Tibial artery (tissue), 4 donors: ENCODE measurements at regions of chr2 and their contacts with region 1.

Region 1: GRCh38 chr2:86079981-86080911 is 25.4 kb downstream of the POLR1A start:
- DNase-seq: peak; percentile 83 to 86
- H3K4me3 ChIP-seq: no peak overlapping the region
- H3K27ac ChIP-seq: no peak overlapping the region
- H3K4me1 ChIP-seq: no peaks in the 10 kb centered on the region
- H3K27me3 ChIP-seq: no peaks in the 10 kb centered on the region
- CTCF ChIP-seq: peak; percentile 72 to 80

Region 2: DNA sequence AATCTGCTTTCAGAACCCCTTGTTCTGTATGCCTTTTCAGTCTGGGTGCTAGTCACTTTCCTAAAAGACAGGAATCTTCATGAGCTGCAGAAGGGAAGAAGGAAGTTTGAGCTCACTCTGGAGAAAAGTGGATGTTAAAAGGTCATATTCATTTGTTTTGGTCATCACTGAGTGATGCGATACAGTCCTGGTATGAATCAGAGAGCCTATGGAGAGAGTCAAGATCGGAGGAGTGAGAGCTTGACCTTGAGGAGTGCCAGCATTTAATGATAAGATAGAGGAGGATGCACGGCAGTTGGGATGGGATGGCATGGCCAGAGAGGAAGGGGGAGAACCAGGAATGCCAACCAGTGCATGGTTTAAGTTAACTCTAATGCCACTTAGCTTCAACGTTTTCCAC is 444.6 kb before region 1 on chr2:
- intact Hi-C with region 1: loop called (anchors 10 kb)
- DNase-seq: no peak
- H3K4me3 ChIP-seq: no peak overlapping the region
- H3K27ac ChIP-seq: no peak overlapping the region
- H3K4me1 ChIP-seq: no peaks in the 10 kb centered on the region
- H3K27me3 ChIP-seq: no peaks in the 10 kb centered on the region
- CTCF ChIP-seq: no peak

Region 3: GRCh38 chr2:85728883-85729824 is 351.1 kb before region 1 on chr2:
- intact Hi-C with region 1: loop called (anchors 10 kb)
- DNase-seq: peak; percentile 91 to 95
- H3K4me3 ChIP-seq: no peak overlapping the region
- H3K27ac ChIP-seq: peak overlapping the region; percentile 31 to 51
- H3K4me1 ChIP-seq: peaks cover 0 to 16% (median 9%) of the 10 kb centered on the region in 4 donors
- H3K27me3 ChIP-seq: no peaks in the 10 kb centered on the region
- CTCF ChIP-seq: peak; percentile 97 to 98

Region 4: GRCh38 chr2:85826990-85827878 is 253.0 kb before region 1 on chr2:
- intact Hi-C with region 1: loop called (anchors 1 kb)
- DNase-seq: peak; percentile 77 to 82
- H3K4me3 ChIP-seq: no peak overlapping the region
- H3K27ac ChIP-seq: no peak overlapping the region
- H3K4me1 ChIP-seq: peaks cover 0 to 9% (median 7%) of the 10 kb centered on the region in 4 donors
- H3K27me3 ChIP-seq: no peaks in the 10 kb centered on the region
- CTCF ChIP-seq: peak; percentile 91 to 96

Region 5: DNA sequence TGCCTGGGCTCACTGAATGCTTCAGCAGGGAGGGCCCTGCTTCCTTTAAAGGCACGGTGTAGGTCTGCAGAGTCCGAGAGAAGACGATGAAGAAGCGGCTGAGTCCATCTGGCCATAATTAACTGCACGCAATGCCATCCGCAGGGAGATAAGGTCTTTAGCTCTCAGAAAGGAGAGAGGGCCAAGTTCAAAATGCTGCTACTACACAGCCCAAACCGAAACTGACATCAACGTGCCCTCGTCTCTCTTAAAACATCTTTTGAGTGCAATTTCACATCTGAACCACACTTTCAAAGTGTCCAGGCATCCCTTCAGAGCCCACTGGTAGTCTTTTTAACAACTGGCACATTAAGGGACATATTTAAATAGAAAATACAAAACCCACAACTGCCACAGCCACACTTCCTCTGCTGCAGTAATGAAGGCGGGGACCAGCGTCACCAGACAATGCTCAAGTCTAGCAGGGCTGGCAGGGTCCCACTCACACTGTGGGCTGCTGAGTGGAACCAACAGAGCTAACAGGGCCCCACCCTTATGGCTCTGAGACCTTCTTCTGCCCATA is 227.2 kb before region 1 on chr2:
- intact Hi-C with region 1: no loop called
- DNase-seq: peak in 1 of 2 donors; percentile 44
- H3K4me3 ChIP-seq: no peak overlapping the region
- H3K27ac ChIP-seq: no peak overlapping the region
- H3K4me1 ChIP-seq: no peaks in the 10 kb centered on the region
- H3K27me3 ChIP-seq: no peaks in the 10 kb centered on the region
- CTCF ChIP-seq: no peak

Region 6: DNA sequence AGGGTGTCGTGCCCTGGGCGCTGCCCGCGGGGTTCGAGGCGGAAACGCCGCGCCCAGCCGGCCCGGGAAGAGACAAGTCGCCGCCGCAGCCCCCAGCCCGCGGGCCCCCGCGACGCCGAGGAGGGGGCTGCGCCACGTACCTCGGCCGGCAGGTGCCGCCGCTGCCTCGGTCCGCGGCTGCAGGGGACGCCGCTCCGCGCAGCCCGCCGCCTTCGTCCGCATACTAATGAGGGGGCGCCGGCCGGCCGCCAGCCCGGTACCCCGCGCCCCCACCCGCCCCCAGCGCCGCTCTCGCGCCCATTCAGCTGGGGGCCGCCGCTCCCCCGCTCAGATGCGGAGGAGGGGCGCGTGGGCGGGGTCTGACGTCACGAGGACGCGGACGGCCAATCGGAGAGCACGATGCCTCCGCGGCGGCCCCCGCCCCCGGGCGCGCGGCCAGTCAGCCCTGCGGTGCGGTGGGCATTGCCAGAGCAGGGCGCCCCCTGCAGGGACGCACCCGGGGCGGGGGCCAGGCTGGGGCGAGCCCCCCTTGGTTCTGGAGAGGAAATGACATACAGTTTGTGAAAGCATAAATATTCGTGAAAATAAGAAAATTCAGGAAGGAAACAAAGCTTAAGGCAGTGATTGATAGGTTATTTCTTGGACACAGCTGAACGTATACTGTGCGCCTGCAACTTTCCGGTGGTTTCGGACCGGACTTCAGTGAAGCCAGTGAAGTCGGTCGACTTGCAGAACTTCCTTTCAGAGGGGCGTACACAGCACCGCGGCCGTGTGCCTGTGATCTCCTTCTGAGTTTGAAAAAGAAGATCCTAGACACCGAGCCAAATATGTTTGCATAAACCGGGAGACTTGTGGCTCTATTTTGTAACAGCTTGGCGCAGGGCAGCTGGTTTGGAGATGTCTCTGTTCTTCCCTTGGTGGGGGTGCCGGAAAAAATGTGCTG is 191.3 kb before region 1 on chr2 and contains the start of gene ST3GAL5:
- intact Hi-C with region 1: loop called (anchors 5 kb)
- DNase-seq: peak; percentile 86 to 93
- H3K4me3 ChIP-seq: peak within 1 kb of the TSS; percentile 61 to 76
- H3K27ac ChIP-seq: peak within 1 kb of the TSS; percentile 71 to 77
- H3K4me1 ChIP-seq: peaks cover 0 to 37% (median 23%) of the 10 kb centered on the region in 4 donors
- H3K27me3 ChIP-seq: no peaks in the 10 kb centered on the region
- CTCF ChIP-seq: peak; percentile 52 to 64

Region 7: DNA sequence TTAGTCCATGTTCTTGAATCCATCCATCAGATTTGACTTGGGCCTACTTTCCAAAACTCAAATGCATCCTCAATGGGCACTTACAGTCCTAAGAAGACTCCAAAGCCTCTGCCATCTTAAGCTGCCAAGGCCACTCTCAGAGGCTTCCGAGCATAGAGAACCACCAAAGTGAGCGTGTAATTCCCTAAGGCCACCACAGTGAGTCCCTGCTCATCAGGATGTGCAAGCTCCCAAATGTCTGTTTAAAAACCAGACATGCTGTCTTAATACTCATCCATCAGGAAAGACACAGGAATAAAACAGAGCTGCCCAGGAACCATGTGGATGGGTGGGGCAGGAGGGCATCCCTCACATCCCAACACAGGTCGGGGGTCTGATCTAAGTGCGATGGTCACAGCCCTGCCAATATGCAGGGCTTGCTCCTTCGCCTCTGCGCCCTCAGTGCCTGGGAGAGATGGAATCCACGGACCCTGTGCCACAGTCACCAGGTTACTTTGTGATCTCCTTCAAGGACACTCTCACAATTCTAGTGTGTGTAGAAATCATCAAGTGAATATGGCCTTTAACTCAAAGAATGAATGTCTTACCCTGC is 54.9 kb before region 1 on chr2:
- intact Hi-C with region 1: no loop called
- DNase-seq: peak in 1 of 2 donors; percentile 60
- H3K4me3 ChIP-seq: no peak overlapping the region
- H3K27ac ChIP-seq: no peak overlapping the region
- H3K4me1 ChIP-seq: peaks cover 0 to 16% (median 8%) of the 10 kb centered on the region in 4 donors
- H3K27me3 ChIP-seq: no peaks in the 10 kb centered on the region
- CTCF ChIP-seq: no peak